ENCODE measurements at regions of chr13 and their contacts with region 1.

Region 1: GRCh38 chr13:26186118-26186870 is 35.8 kb downstream of the RNF6 start:
- DNase-seq: peak; percentile 94
- ATAC-seq: peak; percentile 84
- H3K4me3 Mint-ChIP-seq: peak overlapping the region; percentile 87
- H3K27ac Mint-ChIP-seq: peak overlapping the region; percentile 91
- H3K4me1 Mint-ChIP-seq: peaks cover 48% of the 10 kb centered on the region
- H3K27me3 Mint-ChIP-seq: no peaks in the 10 kb centered on the region
- CTCF ChIP-seq: no peak

Region 2: DNA sequence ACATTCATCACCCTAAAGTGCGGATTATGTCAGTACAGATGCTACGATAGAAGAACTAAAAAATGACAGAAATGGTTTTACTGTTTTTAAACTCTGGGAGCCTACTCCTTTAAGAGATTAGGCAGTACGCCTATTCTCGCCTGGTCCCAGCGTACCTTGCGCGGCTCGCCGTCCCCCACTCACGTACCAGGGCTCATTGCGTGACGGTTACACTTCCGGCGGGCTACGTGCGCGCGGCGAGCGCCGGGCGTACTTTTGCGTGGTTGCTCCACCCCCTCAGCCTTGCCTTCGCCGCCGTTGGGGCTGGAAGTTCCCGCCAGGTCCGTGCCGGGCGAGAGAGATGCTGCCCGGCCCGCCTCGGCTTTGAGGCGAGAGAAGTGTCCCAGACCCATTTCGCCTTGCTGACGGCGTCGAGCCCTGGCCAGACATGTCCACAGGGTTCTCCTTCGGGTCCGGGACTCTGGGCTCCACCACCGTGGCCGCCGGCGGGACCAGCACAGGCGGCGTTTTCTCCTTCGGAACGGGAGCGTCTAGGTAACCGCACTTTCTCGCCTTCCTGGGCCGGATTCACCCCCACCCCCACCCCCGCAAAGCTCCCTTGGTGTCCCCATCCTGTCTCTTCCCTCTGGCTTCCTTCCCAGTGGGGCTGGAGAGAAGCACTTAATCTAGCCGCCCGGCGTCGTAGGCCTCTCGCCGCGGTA is 884.8 kb before region 1 on chr13 and contains the start of gene NUP58:
- CTCF ChIA-PET with region 1: no interaction called
- POLR2A ChIA-PET with region 1: no interaction called
- intact Hi-C with region 1: loop called (anchors 1 kb)
- DNase-seq: peak; percentile 89
- ATAC-seq: peak; percentile 99
- H3K4me3 Mint-ChIP-seq: peak within 1 kb of the TSS; percentile 91
- H3K27ac Mint-ChIP-seq: peak within 1 kb of the TSS; percentile 91
- H3K4me1 Mint-ChIP-seq: peaks cover 32% of the 10 kb centered on the region
- H3K27me3 Mint-ChIP-seq: peaks cover 19% of the 10 kb centered on the region
- CTCF ChIP-seq: no peak
- total RNA-seq, gene NUP58: 44.8 and 48.4 TPM in 2 replicates

Region 3: GRCh38 chr13:25948910-25949309 is 237.4 kb before region 1 on chr13:
- CTCF ChIA-PET with region 1: no interaction called
- POLR2A ChIA-PET with region 1: no interaction called
- intact Hi-C with region 1: no loop called
- DNase-seq: no peak
- ATAC-seq: no peak
- H3K4me3 Mint-ChIP-seq: no peak overlapping the region
- H3K27ac Mint-ChIP-seq: no peak overlapping the region
- H3K4me1 Mint-ChIP-seq: no peaks in the 10 kb centered on the region
- H3K27me3 Mint-ChIP-seq: no peaks in the 10 kb centered on the region
- CTCF ChIP-seq: no peak

Region 4: GRCh38 chr13:25990809-25991208 is 195.5 kb before region 1 on chr13:
- CTCF ChIA-PET with region 1: no interaction called
- POLR2A ChIA-PET with region 1: no interaction called
- intact Hi-C with region 1: no loop called
- DNase-seq: no peak
- ATAC-seq: no peak
- H3K4me3 Mint-ChIP-seq: no peak overlapping the region
- H3K27ac Mint-ChIP-seq: no peak overlapping the region
- H3K4me1 Mint-ChIP-seq: no peaks in the 10 kb centered on the region
- H3K27me3 Mint-ChIP-seq: no peaks in the 10 kb centered on the region
- CTCF ChIP-seq: no peak

Region 5: GRCh38 chr13:26253787-26254582 is 67.7 kb after region 1 on chr13 and contains the start of gene CDK8:
- CTCF ChIA-PET with region 1: interaction called, 4 read pairs
- POLR2A ChIA-PET with region 1: interaction called, 15 read pairs
- intact Hi-C with region 1: loop called (anchors 1 kb)
- DNase-seq: peak; percentile 87
- ATAC-seq: peak; percentile 86
- H3K4me3 Mint-ChIP-seq: peak within 1 kb of the TSS; percentile 92
- H3K27ac Mint-ChIP-seq: peak within 1 kb of the TSS; percentile 88
- H3K4me1 Mint-ChIP-seq: peaks cover 36% of the 10 kb centered on the region
- H3K27me3 Mint-ChIP-seq: no peaks in the 10 kb centered on the region
- CTCF ChIP-seq: no peak
- total RNA-seq, gene CDK8: 10.9 and 12.8 TPM in 2 replicates

Region 6: DNA sequence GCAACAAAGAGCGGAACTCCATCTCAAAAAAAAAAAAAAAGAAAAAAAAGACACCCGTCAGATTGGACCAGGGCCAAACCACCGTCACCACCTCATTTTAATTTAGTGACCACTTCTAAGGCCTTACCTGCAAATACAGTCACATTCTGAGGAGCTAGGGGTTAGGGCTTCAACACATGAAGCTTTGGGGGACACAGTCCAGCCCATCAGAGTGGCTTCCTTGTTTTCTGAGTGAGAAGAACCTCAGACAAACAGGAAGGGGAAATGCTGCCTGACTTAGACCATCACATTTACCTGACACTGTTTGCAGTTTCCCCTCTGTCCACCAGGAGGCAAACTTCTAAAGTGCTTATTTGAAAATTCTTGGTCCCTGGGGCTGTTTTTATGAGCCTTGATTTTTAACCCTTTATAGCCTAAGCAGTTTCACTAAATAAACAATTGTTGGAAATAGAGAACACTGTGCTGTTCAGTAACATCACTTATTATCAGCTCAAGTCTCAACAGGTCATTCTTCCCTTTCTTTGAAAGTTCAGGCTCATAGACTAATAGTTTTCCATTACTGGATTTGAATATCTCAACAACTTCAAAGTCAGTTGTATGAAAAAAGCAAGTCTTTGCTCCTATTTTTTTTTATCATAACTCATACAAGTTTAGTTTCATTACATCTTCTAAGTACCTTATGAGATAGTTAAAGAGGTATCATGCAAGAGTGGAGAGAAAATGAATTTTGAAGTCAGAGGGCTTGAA is 296.3 kb after region 1 on chr13:
- CTCF ChIA-PET with region 1: interaction called, 7 read pairs
- POLR2A ChIA-PET with region 1: interaction called, 3 read pairs
- intact Hi-C with region 1: loop called (anchors 1 kb)
- DNase-seq: no peak
- ATAC-seq: peak; percentile 82
- H3K4me3 Mint-ChIP-seq: peak overlapping the region; percentile 48
- H3K27ac Mint-ChIP-seq: no peak overlapping the region
- H3K4me1 Mint-ChIP-seq: peaks cover 6% of the 10 kb centered on the region
- H3K27me3 Mint-ChIP-seq: peaks cover 2% of the 10 kb centered on the region
- CTCF ChIP-seq: no peak

Region 7: GRCh38 chr13:26601669-26602068 is 415.4 kb after region 1 on chr13:
- CTCF ChIA-PET with region 1: interaction called, 8 read pairs
- POLR2A ChIA-PET with region 1: interaction called, 3 read pairs
- intact Hi-C with region 1: loop called (anchors 10 kb)
- DNase-seq: no peak
- ATAC-seq: peak; percentile 25
- H3K4me3 Mint-ChIP-seq: no peak overlapping the region
- H3K27ac Mint-ChIP-seq: no peak overlapping the region
- H3K4me1 Mint-ChIP-seq: peaks cover 7% of the 10 kb centered on the region
- H3K27me3 Mint-ChIP-seq: no peaks in the 10 kb centered on the region
- CTCF ChIP-seq: no peak

Region 8: DNA sequence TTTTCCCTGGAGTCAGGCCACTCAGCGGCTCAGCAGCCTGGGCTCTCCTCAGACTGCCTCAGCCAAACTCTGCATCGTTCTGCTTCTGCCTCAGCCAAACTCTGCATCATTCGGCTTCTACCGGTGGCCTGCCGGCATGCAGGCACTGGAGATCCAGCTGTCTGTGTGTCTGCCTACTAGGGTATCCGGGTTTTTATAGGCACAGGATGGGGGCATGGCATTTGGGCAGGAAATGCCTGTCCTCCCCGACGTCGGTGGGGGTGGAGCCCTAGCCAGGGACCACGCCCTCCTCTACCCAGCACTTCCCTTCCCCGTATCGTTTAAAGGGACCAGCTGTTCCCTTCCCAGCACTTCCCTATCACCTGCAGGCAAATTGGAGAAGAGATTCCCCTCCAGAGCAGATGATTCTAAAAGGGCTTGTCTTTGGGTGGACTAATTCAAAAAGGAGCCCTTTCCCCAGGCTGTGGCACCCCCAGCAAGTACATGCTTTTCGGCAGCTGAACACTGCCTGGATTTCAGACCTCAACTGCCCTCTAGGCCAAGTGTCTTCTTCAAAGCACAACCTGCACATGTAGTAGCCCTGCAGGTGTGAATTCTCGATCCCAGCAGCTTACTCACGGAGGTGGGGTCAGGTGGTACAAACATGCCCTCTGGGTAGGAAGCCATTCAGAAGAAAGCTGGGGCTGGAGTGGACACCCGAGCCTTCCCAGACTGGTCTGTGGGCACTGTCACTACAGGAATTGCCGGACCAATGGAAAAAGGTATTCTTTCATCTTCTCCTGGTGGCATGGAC is 599.7 kb after region 1 on chr13:
- CTCF ChIA-PET with region 1: no interaction called
- POLR2A ChIA-PET with region 1: interaction called, 4 read pairs
- intact Hi-C with region 1: loop called (anchors 2 kb)
- DNase-seq: peak; percentile 50
- ATAC-seq: peak; percentile 66
- H3K4me3 Mint-ChIP-seq: peak overlapping the region; percentile 86
- H3K27ac Mint-ChIP-seq: peak overlapping the region; percentile 80
- H3K4me1 Mint-ChIP-seq: peaks cover 22% of the 10 kb centered on the region
- H3K27me3 Mint-ChIP-seq: peaks cover 3% of the 10 kb centered on the region
- CTCF ChIP-seq: no peak

Region 9: GRCh38 chr13:27130979-27131623 is 944.8 kb after region 1 on chr13:
- CTCF ChIA-PET with region 1: no interaction called
- POLR2A ChIA-PET with region 1: no interaction called
- intact Hi-C with region 1: loop called (anchors 5 kb)
- DNase-seq: peak; percentile 28
- ATAC-seq: peak; percentile 88
- H3K4me3 Mint-ChIP-seq: peak overlapping the region; percentile 2
- H3K27ac Mint-ChIP-seq: peak overlapping the region; percentile 88
- H3K4me1 Mint-ChIP-seq: peaks cover 91% of the 10 kb centered on the region
- H3K27me3 Mint-ChIP-seq: no peaks in the 10 kb centered on the region
- CTCF ChIP-seq: no peak